Esophagus muscularis mucosa (tissue), 4 donors: ENCODE measurements at regions of chr11 and their contacts with region 1.

Region 1: GRCh38 chr11:129331871-129332274 is 43.8 kb upstream of the BARX2 start:
- DNase-seq: no peak
- H3K4me3 ChIP-seq: no peak overlapping the region
- H3K27ac ChIP-seq: no peak overlapping the region
- H3K4me1 ChIP-seq: peaks cover 0 to 7% (median 0%) of the 10 kb centered on the region in 4 donors
- H3K27me3 ChIP-seq: no peaks in the 10 kb centered on the region
- CTCF ChIP-seq: peak; percentile 83 to 90 (median 87)
- EP300 ChIP-seq: no peak
- POLR2A ChIP-seq: no peak

Region 2: DNA sequence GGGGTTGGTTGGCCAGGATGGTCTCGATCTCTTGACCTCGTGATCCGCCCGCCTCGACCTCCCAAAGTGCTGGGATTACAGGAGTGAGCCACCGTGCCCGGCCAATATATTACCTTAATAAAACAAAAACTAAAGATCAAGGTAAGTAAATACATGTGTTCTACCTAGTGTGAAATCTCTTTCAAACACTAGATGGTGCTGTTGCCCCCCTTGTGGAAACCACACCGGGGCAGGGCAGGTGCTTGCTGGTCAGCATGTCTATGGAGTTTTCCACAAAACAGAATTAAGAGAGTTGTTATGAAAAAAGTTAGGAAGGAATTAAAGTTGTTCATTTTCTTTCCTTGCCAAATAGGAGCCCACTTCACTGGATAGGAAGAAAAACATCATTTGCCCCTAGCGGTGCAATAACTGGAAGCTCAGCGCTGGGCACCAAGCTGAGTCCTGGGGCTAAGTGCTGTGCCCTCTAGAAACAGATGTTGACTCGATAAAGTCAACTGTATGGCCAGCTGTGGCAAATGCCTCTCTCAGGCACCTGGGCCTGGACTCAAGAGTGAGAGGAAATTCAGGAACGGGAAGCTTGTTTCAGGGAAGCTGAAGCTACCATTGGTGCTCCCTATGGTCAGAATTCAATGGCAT is 447.1 kb before region 1 on chr11:
- intact Hi-C with region 1: loop called (anchors 10 kb)
- DNase-seq: no peak
- H3K4me3 ChIP-seq: no peak overlapping the region
- H3K27ac ChIP-seq: no peak overlapping the region
- H3K4me1 ChIP-seq: peaks cover 0 to under 1% (median 0%) of the 10 kb centered on the region in 4 donors
- H3K27me3 ChIP-seq: peaks cover 0 to 48% (median 2%) of the 10 kb centered on the region in 4 donors
- CTCF ChIP-seq: peak; percentile 86 to 87 (median 86)
- EP300 ChIP-seq: no peak
- POLR2A ChIP-seq: no peak

Region 3: DNA sequence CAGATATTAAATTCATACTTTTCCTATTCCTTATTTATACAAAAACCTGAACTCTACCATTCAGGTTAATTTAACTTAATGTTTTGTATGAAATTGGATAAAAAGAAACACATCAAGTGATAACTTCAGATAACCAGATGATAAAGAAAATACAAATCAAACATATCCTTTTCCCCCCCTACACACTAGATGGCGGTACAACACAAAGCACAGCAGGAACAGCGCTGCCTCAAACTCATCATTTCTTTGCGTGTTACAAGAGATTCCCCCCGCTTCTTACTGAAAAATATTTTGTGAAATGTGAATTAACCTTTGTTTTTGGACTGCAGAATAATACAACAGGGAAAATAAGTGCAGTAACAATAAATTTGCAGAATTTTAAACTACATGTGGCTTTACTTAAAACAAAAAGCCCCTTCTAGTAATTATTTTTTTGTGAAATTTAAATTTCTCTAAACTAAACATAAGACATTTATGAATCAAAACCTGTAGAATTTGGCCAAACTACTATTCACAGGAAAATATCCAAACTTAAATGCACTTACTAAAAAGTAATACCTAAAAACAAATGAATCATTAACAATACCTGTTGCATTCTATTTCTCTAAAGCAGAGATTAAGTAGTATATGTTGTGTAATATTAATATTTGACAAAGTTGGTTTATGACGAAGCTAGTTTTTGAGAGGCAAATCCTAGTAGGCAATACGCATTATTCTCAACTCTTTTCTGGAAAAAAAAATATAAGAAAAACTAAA is 214.1 kb before region 1 on chr11:
- intact Hi-C with region 1: loop called (anchors 2 kb)
- DNase-seq: no peak
- H3K4me3 ChIP-seq: no peak overlapping the region
- H3K27ac ChIP-seq: no peak overlapping the region
- H3K4me1 ChIP-seq: peaks cover 0 to 9% (median 5%) of the 10 kb centered on the region in 4 donors
- H3K27me3 ChIP-seq: no peaks in the 10 kb centered on the region
- CTCF ChIP-seq: peak; percentile 75 to 83 (median 83)
- EP300 ChIP-seq: no peak
- POLR2A ChIP-seq: no peak

Region 4: GRCh38 chr11:129230006-129230405 is 101.9 kb before region 1 on chr11:
- intact Hi-C with region 1: loop called (anchors 5 kb)
- DNase-seq: no peak
- H3K4me3 ChIP-seq: no peak overlapping the region
- H3K27ac ChIP-seq: no peak overlapping the region
- H3K4me1 ChIP-seq: no peaks in the 10 kb centered on the region
- H3K27me3 ChIP-seq: no peaks in the 10 kb centered on the region
- CTCF ChIP-seq: peak in 2 of 3 experiments; percentile 16 to 19
- EP300 ChIP-seq: no peak
- POLR2A ChIP-seq: no peak